ENCODE measurements at regions of chr13 and their contacts with region 1.

Region 1: GRCh38 chr13:95156208-95156607 is 145.0 kb downstream of the ABCC4 start:
- DNase-seq: peak; percentile 50
- H3K4me3 ChIP-seq: no peak overlapping the region
- H3K27ac ChIP-seq: no peak overlapping the region
- H3K4me1 ChIP-seq: peaks cover 22% of the 10 kb centered on the region
- H3K27me3 ChIP-seq: no peaks in the 10 kb centered on the region
- CTCF ChIP-seq: peak; percentile 18 to 27
- POLR2A ChIP-seq: no peak

Region 2: DNA sequence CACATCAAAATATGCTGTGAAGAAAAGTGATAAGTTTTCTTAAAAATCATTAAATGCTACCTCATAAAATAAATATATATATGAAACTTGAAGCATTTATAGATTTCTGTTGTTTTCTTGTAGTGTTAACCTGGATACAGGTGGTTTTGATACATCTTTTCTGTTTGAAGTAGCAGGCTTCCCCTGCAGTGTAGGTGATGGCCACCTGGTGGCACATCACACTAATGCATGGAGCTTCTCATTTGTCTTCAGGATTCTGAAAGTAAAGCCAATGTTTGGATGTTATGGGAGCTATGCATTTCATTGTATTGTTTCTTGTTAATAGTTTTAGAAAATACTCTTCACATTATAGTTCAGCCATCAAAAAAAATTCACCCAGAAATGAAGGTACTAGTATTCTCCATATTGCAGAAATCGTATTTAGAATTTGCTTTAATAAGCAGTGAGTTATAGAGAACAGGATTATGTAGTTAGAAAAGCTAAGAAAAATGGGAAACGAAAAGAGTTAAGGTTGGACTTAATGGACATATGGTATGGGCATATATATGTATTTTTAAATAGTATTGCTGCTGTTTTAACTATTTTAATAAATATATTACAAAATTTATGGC is 535.8 kb before region 1 on chr13:
- CTCF ChIA-PET with region 1: interaction called, 49 read pairs
- POLR2A ChIA-PET with region 1: no interaction called
- dilution Hi-C with region 1: no loop called
- intact Hi-C with region 1: loop called (anchors 1 kb)
- DNase-seq: peak; percentile 52
- H3K4me3 ChIP-seq: no peak overlapping the region
- H3K27ac ChIP-seq: no peak overlapping the region
- H3K4me1 ChIP-seq: peaks cover 6% of the 10 kb centered on the region
- H3K27me3 ChIP-seq: no peaks in the 10 kb centered on the region
- CTCF ChIP-seq: peak; percentile 62 to 68
- POLR2A ChIP-seq: no peak

Region 3: DNA sequence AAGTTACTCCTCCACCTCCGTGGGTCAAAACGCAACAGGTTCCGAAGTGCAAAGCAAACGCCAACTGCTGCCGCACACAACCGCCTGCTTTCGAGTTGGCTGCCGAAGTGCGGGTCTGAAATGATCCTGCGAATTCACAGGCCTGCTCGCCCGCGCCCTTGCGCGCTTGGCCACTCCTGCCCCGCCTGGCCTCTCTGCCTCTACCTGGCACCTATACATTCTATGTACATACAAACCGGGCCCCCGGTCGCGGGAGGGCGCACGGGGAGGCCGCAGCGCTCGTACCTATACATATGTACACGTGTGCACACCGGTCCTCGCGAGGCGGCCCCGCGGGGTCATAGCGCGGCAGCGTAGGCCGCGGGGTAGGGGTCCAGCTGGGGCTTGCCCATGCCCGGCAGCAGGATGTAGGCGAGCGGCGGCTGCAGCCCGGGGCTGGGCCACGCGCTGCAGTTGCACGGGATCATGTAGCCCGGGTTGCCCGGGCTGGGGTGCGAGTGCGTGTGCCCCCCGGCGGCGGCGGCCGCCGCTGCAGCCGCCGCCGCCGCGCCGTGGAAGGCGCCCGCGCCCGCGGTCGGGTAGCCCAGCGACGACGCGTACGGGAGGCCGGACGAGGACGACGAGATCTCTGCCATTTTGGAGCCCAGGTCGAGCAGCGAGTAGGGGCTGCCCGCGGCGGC is 445.2 kb before region 1 on chr13:
- CTCF ChIA-PET with region 1: interaction called, 80 read pairs
- POLR2A ChIA-PET with region 1: no interaction called
- dilution Hi-C with region 1: no loop called
- intact Hi-C with region 1: loop called (anchors 1 kb)
- DNase-seq: no peak
- H3K4me3 ChIP-seq: no peak overlapping the region
- H3K27ac ChIP-seq: no peak overlapping the region
- H3K4me1 ChIP-seq: peaks cover 12% of the 10 kb centered on the region
- H3K27me3 ChIP-seq: peaks cover 68 to 95% of the 10 kb centered on the region in 2 experiments
- CTCF ChIP-seq: peak; percentile 31 to 33
- POLR2A ChIP-seq: no peak

Region 4: GRCh38 chr13:94967183-94968039 is 188.8 kb before region 1 on chr13:
- CTCF ChIA-PET with region 1: interaction called, 26 read pairs
- POLR2A ChIA-PET with region 1: no interaction called
- dilution Hi-C with region 1: no loop called
- intact Hi-C with region 1: no loop called
- DNase-seq: peak; percentile 12
- H3K4me3 ChIP-seq: peak overlapping the region in 1 of 3 experiments; percentile 19
- H3K27ac ChIP-seq: no peak overlapping the region
- H3K4me1 ChIP-seq: peaks cover 6% of the 10 kb centered on the region
- H3K27me3 ChIP-seq: peaks cover 56 to 99% of the 10 kb centered on the region in 2 experiments
- CTCF ChIP-seq: no peak
- POLR2A ChIP-seq: no peak

Region 5: DNA sequence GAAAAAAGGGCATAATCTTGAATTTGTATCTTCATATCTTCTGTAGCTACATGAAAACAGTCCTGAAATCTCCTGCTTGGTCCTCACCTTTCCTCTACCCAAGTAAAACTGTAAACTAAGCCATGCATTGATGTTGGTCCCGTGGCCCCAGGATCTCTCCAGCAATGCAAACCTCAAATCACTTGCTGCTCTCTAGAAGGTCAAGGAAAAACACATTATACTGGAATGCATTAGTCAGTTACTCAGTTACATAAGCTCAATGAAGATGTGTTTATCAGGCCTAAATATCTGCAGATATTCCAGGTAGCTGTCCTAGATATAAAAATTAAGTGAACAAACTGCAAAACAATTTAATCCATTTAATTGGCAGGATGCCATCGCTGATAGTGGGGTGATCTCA is 116.8 kb before region 1 on chr13:
- CTCF ChIA-PET with region 1: interaction called, 11 read pairs
- POLR2A ChIA-PET with region 1: no interaction called
- dilution Hi-C with region 1: no loop called
- intact Hi-C with region 1: no loop called
- DNase-seq: no peak
- H3K4me3 ChIP-seq: no peak overlapping the region
- H3K27ac ChIP-seq: no peak overlapping the region
- H3K4me1 ChIP-seq: no peaks in the 10 kb centered on the region
- H3K27me3 ChIP-seq: no peaks in the 10 kb centered on the region
- CTCF ChIP-seq: no peak
- POLR2A ChIP-seq: no peak

Region 6: DNA sequence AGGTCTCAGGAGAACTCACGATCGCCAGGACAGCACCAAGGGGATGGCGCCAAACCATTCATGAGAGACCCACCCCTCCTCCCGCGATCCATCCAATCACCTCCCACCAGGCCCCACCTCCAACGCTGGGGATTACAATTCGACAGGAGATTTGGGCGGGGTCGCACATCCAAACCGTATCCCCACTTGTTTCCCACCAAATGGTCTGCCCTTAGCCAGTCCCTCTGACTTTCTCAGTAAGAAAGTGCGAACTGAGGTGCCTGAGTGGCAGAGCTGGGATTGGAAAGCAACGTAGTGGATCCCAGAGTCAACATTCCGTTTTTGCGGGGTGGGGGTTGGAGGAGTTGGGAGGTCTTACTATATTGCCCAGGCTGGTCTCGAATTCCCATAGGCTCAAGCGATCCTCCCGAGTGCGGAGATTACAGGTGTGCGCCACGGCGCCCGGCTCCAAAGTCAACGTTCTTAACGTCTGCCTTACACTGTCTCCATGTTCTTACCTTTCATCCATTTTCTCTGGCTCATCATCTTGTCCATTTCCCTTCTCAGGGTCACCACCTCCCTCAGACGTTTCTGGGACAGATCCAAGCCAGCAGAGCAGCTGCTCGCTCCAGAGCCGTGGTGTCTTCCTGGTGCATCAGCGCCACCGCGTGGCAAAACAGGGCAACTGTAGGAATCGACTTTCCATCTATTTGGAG is 247.8 kb after region 1 on chr13:
- CTCF ChIA-PET with region 1: interaction called, 24 read pairs
- POLR2A ChIA-PET with region 1: no interaction called
- dilution Hi-C with region 1: no loop called
- intact Hi-C with region 1: no loop called
- DNase-seq: peak; percentile 78
- H3K4me3 ChIP-seq: peak overlapping the region in 2 of 3 experiments; percentile 0 to 18
- H3K27ac ChIP-seq: no peak overlapping the region
- H3K4me1 ChIP-seq: peaks cover 5% of the 10 kb centered on the region
- H3K27me3 ChIP-seq: no peaks in the 10 kb centered on the region
- CTCF ChIP-seq: peak; percentile 88 to 90
- POLR2A ChIP-seq: no peak

Region 7: DNA sequence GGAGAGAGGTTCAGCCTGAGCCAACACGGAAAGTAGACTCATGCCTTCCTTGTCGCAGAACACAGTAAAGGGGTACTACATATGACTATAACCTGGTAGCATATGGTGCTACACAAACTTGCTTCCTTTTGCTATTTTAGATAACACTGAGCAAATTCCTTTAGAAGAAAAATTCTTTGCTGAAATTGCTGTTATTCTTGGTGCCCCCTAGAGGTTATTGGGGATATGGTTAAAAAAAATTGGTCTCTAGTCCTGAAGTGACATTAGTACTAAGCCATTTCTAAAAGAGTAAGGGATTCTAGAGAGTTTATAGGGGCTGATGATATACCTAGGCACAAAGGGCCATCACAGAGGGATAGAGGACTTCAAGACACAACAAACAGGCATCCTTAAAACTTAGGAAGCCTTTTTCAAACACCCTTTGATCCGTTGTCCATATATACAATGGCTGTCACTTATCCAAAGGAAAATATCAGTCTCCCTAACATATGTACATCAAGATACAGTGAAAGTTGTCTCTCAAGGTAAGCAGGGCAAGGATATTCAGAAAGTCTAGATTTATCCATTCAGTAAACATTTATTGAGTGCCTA is 919.8 kb after region 1 on chr13:
- CTCF ChIA-PET with region 1: no interaction called
- POLR2A ChIA-PET with region 1: no interaction called
- dilution Hi-C with region 1: no loop called
- intact Hi-C with region 1: no loop called
- DNase-seq: peak; percentile 39
- H3K4me3 ChIP-seq: no peak overlapping the region
- H3K27ac ChIP-seq: no peak overlapping the region
- H3K4me1 ChIP-seq: no peaks in the 10 kb centered on the region
- H3K27me3 ChIP-seq: peaks cover 9% of the 10 kb centered on the region in 2 experiments
- CTCF ChIP-seq: peak; percentile 46 to 52
- POLR2A ChIP-seq: no peak